ENCODE measurements at regions of chr4 and their contacts with region 1.

Region 1: DNA sequence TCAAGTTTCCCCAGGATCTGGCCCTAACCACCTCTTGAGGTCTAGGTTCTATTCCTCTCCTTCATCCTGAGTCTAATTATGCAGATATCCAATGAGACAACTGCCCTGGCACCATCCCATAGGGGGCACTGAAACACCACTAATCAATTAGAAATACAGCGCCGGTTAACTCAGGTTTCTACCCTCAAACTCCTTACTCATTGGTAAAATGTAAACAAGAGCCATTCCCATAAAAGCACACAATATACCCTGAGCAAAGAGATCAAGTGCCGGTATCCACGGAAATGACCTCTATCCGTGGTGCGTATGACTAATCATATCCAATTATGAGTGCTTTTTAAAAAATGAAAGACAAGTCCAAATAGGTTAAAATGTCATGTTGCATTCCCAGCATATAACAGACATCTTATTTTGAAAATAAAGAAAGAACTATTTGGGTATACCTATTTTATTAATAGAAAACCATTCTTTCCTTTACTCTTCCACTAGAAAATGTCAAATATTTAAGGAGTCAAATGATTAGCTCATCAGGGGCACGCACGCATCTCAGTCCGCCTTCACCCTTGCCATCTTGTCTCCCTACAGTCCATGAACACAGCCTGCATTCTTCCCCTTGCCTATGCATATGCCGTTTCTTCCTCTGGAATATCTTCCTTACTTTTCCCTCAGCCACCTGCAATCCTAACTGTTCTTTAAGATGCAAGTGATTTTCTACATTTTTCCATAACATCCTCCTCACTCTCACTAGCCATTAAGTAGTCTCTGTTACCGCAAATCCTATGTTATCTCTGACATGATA is 141.1 kb downstream of the MAML3 start:
- DNase-seq: peak; percentile 82 to 86 (median 84)
- H3K4me3 ChIP-seq: peak overlapping the region in 4 of 7 experiments; percentile 12 to 64 (median 37)
- H3K27ac ChIP-seq: peak overlapping the region in 1 of 2 experiments; percentile 20
- H3K4me1 ChIP-seq: peaks cover 0 to 13% (median 8%) of the 10 kb centered on the region in 4 experiments
- H3K27me3 ChIP-seq: no peaks in the 10 kb centered on the region

Region 2: GRCh38 chr4:139734875-139735380 is 278.0 kb before region 1 on chr4:
- CTCF ChIA-PET with region 1: interaction called, 22 read pairs
- POLR2A ChIA-PET with region 1: no interaction called
- DNase-seq: peak; percentile 87 to 97 (median 96)
- H3K4me3 ChIP-seq: peak overlapping the region; percentile 16 to 82 (median 57)
- H3K27ac ChIP-seq: peak overlapping the region in 1 of 2 experiments; percentile 63
- H3K4me1 ChIP-seq: peaks cover 6 to 26% (median 13%) of the 10 kb centered on the region in 4 experiments
- H3K27me3 ChIP-seq: no peaks in the 10 kb centered on the region

Region 3: GRCh38 chr4:140109737-140110136 is 96.8 kb after region 1 on chr4:
- CTCF ChIA-PET with region 1: no interaction called
- POLR2A ChIA-PET with region 1: no interaction called
- DNase-seq: no peak
- H3K4me3 ChIP-seq: no peak overlapping the region
- H3K27ac ChIP-seq: no peak overlapping the region
- H3K4me1 ChIP-seq: peaks cover 3 to 43% (median 22%) of the 10 kb centered on the region in 4 experiments
- H3K27me3 ChIP-seq: no peaks in the 10 kb centered on the region

Region 4: GRCh38 chr4:140153718-140154571 is 141.1 kb after region 1 on chr4 and contains the start of gene MAML3:
- CTCF ChIA-PET with region 1: interaction called, 12 read pairs
- POLR2A ChIA-PET with region 1: interaction called, 3 read pairs
- DNase-seq: peak; percentile 96 to 98 (median 96)
- H3K4me3 ChIP-seq: peak within 1 kb of the TSS; percentile 63 to 100 (median 98)
- H3K27ac ChIP-seq: peak within 1 kb of the TSS; percentile 81 to 91
- H3K4me1 ChIP-seq: peaks cover 28 to 61% (median 54%) of the 10 kb centered on the region in 4 experiments
- H3K27me3 ChIP-seq: no peaks in the 10 kb centered on the region

Region 5: GRCh38 chr4:140252742-140253555 is 240.1 kb after region 1 on chr4:
- CTCF ChIA-PET with region 1: interaction called, 65 read pairs
- POLR2A ChIA-PET with region 1: interaction called, 5 read pairs
- DNase-seq: peak; percentile 63 to 77 (median 76)
- H3K4me3 ChIP-seq: peak overlapping the region; percentile 41 to 80 (median 68)
- H3K27ac ChIP-seq: peak overlapping the region; percentile 27 to 74
- H3K4me1 ChIP-seq: peaks cover 8 to 35% (median 22%) of the 10 kb centered on the region in 4 experiments
- H3K27me3 ChIP-seq: no peaks in the 10 kb centered on the region

Measured in common myeloid progenitor, CD34-positive (primary cell).